ENCODE measurements at regions of chr16 and their contacts with region 1.

Region 1: GRCh38 chr16:89490387-89491237 is at the start of gene ANKRD11:
- DNase-seq: peak; percentile 98 to 100 (median 99)

Region 2: GRCh38 chr16:89330177-89330856 is 160.3 kb before region 1 on chr16:
- intact Hi-C with region 1: loop called (anchors 10 kb)
- DNase-seq: peak in 3 of 10 donors; percentile 54 to 79 (median 72)

Region 3: DNA sequence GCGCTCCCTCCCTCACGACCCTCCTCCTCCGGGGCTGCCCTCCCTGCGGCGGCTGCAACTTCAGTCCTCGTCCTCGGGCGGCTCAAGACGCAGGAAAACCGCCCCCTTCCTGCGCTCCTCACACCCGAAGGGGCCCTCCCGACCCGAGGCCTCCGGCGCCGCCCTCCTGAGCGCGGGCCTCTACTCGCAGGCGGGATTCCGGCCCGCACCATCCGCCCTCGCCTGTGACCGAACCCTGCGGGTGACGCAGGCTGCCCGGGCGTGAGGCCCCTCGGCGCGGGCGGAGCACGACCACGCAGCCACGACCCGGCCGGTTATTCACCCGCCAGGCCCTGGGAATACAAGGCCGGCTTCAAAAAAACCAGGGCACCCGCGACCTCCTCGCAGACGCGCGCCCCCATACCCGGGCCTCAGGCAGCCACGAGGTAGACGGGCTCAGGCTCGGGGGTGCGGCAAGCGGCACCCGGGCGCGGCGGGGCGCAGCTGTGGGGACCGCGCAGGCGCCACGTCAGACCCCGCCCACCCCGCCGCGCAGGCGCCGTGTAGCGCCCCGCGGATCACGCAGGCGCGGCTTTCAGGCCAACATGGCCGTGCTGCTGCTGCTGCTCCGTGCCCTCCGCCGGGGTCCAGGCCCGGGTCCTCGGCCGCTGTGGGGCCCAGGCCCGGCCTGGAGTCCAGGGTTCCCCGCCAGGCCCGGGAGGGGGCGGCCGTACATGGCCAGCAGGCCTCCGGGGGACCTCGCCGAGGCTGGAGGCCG is 17.4 kb after region 1 on chr16 and contains the start of gene SPG7:
- intact Hi-C with region 1: loop called (anchors 2 kb)
- DNase-seq: peak; percentile 61 to 97 (median 78)

Measured in posterior cingulate gyrus (tissue), 11 donors.